Activated CD4-positive, alpha-beta T cell treated with anti-CD3 and anti-CD28 coated beads, Interleukin-2, amount 10 ng/mL, durations not matched to agents 24 days and 14 days (primary cell): ENCODE measurements at regions of chr12 and their contacts with region 1.

Region 1: DNA sequence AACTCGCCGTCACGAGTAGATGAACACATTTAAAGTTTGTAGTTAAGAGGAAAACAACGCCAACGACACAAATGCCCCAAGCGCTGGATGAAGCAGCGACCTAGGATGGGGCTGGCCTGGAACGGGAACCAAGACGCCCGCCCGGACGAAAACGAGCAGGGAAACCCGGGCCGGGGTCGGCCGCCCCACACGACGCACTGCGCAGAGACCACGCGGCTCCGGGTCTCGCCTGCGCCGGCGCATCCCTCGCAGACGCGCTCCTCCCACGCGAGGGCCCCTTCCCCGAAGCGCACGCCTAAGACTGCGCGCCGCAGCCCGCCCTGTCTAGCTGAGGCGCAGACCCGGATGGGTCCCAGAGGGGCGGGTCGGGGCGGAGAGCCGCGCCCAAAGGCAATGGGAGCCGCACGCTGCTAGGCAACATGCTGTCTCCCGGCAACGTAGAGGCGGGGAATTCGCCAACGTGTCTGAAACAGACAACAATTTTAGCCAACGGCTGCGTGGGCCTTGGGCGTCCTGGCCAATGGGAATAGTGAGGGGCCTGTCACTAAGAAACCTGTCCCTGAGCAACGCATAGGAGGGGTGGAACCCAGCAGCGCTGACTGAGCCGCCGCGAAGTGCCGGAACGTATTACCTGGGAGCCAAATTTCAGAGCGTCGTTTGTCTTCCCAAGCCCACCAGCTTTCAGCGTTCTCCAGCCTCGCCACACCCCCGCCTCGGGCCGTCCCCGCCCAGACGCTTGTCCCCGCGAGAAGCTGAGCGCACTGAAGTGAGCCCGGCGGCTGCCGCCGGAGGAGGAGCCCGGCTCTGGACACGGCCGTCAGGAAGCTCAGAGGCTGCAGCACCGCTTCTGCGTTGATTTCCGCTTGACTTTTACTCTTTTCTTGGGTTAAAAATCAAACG is 21.0 kb upstream of the CHFR start:
- DNase-seq: peak; percentile 97
- H3K4me3 Mint-ChIP-seq: peak overlapping the region; percentile 89
- H3K27ac Mint-ChIP-seq: peak overlapping the region; percentile 89
- H3K4me1 Mint-ChIP-seq: peaks cover 3% of the 10 kb centered on the region
- H3K27me3 Mint-ChIP-seq: peaks cover 10% of the 10 kb centered on the region

Region 2: GRCh38 chr12:132761032-132761920 is 147.1 kb before region 1 on chr12 and contains the start of gene ANKLE2:
- intact Hi-C with region 1: loop called (anchors 2 kb)
- DNase-seq: peak; percentile 93
- H3K4me3 Mint-ChIP-seq: peak within 1 kb of the TSS; percentile 89
- H3K27ac Mint-ChIP-seq: peak within 1 kb of the TSS; percentile 96
- H3K4me1 Mint-ChIP-seq: peaks cover 18% of the 10 kb centered on the region
- H3K27me3 Mint-ChIP-seq: no peaks in the 10 kb centered on the region
- total RNA-seq, gene ANKLE2: 137 and 155 TPM in 2 replicates

Region 3: GRCh38 chr12:132828706-132829534 is 79.5 kb before region 1 on chr12 and contains the start of gene GOLGA3:
- intact Hi-C with region 1: loop called (anchors 1 kb)
- DNase-seq: peak; percentile 98
- H3K4me3 Mint-ChIP-seq: peak within 1 kb of the TSS; percentile 98
- H3K27ac Mint-ChIP-seq: peak within 1 kb of the TSS; percentile 100
- H3K4me1 Mint-ChIP-seq: peaks cover 30% of the 10 kb centered on the region
- H3K27me3 Mint-ChIP-seq: no peaks in the 10 kb centered on the region
- total RNA-seq, gene GOLGA3: 67.6 and 68.1 TPM in 2 replicates

Region 4: GRCh38 chr12:132956011-132956788 is 47.8 kb after region 1 on chr12 and contains the start of gene ZNF605:
- intact Hi-C with region 1: loop called (anchors 2 kb)
- DNase-seq: peak; percentile 96
- H3K4me3 Mint-ChIP-seq: peak within 1 kb of the TSS; percentile 98
- H3K27ac Mint-ChIP-seq: peak within 1 kb of the TSS; percentile 95
- H3K4me1 Mint-ChIP-seq: peaks cover 19% of the 10 kb centered on the region
- H3K27me3 Mint-ChIP-seq: no peaks in the 10 kb centered on the region
- total RNA-seq, gene ZNF605: 6.6 and 7.6 TPM in 2 replicates

Region 5: GRCh38 chr12:133037207-133038005 is 129.0 kb after region 1 on chr12 and contains the start of gene ZNF84:
- intact Hi-C with region 1: loop called (anchors 1 kb)
- DNase-seq: peak; percentile 99
- H3K4me3 Mint-ChIP-seq: peak within 1 kb of the TSS; percentile 94
- H3K27ac Mint-ChIP-seq: peak within 1 kb of the TSS; percentile 99
- H3K4me1 Mint-ChIP-seq: peaks cover 11% of the 10 kb centered on the region
- H3K27me3 Mint-ChIP-seq: peaks cover 3% of the 10 kb centered on the region
- total RNA-seq, gene ZNF84: 20.1 and 23.1 TPM in 2 replicates